Activated CD4-positive, alpha-beta T cell treated with anti-CD3 and anti-CD28 coated beads, Interleukin-2, amount 10 ng/mL, durations not matched to agents 24 days and 14 days (primary cell): ENCODE measurements at regions of chr4 and their contacts with region 1.

Region 1: DNA sequence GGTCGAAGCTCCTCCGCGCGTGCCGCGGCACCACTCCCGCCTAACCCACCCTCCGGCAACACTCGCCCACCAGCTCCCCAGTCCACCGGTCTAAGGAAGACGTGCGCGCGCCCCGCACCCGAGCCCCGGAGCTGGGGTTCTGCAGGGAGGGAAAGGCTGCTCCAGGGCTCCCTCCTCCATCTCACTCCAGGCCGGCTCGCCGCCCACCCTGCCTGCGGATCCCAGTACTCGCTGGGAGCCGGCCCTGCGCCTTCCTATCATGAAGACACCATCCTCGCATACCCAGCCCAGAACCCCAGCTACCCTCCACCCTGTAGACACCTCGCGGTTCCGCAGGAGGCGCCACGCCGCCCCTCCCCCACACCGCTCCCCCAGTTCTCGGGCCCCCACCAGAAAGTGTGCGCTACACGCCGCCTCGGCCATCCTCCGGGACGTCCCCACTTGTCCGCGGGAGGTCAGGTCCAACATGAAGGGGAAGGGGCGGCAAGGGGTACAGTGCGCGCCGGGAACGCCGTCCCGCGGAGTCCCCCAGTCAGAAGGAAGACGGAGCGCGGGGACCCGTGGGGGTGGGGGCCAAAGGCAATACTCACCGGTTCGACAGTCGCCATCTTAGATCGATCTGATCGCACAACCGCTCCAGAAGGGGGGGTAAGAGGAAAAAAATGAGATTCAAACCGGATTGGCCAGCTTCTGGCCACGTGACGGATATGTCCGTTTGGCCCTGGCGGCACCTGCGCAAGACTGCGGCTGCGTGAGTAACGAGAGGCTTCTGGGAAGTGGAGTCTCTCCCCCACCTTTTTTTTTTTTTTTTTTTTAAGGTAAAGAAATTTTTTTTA is at the start of gene EIF4E:
- DNase-seq: peak; percentile 98
- H3K4me3 Mint-ChIP-seq: peak within 1 kb of the TSS; percentile 90
- H3K27ac Mint-ChIP-seq: peak within 1 kb of the TSS; percentile 97
- H3K4me1 Mint-ChIP-seq: peaks cover 38% of the 10 kb centered on the region
- H3K27me3 Mint-ChIP-seq: no peaks in the 10 kb centered on the region
- total RNA-seq, gene EIF4E: 151 and 156 TPM in 2 replicates

Region 2: DNA sequence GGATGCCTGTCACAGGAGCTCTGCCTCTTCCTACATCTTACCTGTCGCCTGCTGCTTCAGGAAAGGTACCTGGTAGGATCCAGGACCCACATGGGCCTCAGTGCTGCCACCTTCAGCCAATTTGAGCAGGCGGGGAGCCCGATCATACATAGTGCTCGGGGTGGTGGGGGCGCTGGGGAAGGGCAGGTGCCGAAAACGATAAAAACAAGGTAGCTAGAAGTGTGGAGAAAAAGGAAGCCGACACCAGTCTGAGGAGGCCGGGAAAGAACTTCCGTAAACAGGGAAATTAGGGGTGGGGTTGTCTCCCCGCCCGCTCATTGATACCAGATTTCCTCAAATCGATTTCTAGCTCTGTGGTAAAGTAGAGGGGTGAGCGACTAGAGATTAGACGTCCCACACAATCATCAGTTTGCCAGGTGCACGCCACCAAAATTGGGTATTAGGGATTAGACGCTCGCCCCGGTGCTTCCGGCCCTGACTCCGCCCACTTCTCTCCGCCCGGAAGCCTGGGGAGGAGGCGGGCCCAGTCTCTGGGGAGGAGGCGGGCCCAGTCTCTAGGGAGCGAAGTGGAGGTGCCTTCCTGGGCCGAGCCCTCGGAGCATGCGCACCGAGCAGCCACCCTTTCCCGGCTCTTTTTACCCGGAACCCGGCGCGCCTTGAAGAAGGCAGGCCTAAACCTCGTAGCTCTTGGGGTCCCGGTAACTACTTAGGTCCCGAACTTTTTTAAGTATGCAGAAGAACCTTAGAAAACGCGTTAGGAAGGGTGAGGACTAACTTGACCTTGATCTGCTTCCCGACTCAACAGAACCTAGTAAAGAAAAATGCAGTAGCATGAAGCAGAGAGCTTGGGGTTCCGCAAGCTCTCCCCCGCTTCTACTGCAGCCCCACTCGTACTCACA is 785.5 kb before region 1 on chr4 and contains the start of gene STPG2:
- intact Hi-C with region 1: loop called (anchors 1 kb)
- DNase-seq: peak; percentile 98
- H3K4me3 Mint-ChIP-seq: peak within 1 kb of the TSS; percentile 95
- H3K27ac Mint-ChIP-seq: peak within 1 kb of the TSS; percentile 96
- H3K4me1 Mint-ChIP-seq: peaks cover 11% of the 10 kb centered on the region
- H3K27me3 Mint-ChIP-seq: peaks cover 14% of the 10 kb centered on the region
- total RNA-seq, gene STPG2: not detected in 2 replicates

Region 3: DNA sequence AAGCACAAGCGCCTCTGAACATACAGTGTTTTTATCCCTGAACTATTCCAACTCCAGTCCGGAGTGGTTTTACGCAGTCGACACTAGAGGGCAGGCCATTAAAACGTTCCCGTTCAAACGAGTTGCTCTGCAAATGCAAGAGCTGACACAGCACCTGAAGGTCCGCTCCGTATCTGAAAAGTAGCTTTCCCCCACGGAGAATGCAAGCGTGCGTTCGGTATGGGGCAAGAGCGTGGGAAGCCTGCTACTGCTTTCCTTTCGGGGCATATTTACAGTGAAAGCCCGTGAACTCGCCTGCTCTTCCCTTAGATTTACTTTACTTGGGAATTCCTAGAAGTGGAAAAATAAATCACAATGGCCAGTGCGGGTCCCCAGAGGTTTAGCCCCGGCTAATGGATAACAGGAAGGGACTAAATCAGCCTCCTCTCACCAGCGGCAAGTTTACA is 461.1 kb before region 1 on chr4:
- intact Hi-C with region 1: loop called (anchors 2 kb)
- DNase-seq: peak; percentile 92
- H3K4me3 Mint-ChIP-seq: peak overlapping the region; percentile 79
- H3K27ac Mint-ChIP-seq: peak overlapping the region; percentile 38
- H3K4me1 Mint-ChIP-seq: peaks cover 33% of the 10 kb centered on the region
- H3K27me3 Mint-ChIP-seq: no peaks in the 10 kb centered on the region

Region 4: GRCh38 chr4:98601708-98602107 is 327.0 kb before region 1 on chr4:
- intact Hi-C with region 1: loop called (anchors 1 kb)
- DNase-seq: no peak
- H3K4me3 Mint-ChIP-seq: peak overlapping the region; percentile 72
- H3K27ac Mint-ChIP-seq: peak overlapping the region; percentile 95
- H3K4me1 Mint-ChIP-seq: peaks cover 54% of the 10 kb centered on the region
- H3K27me3 Mint-ChIP-seq: no peaks in the 10 kb centered on the region

Region 5: DNA sequence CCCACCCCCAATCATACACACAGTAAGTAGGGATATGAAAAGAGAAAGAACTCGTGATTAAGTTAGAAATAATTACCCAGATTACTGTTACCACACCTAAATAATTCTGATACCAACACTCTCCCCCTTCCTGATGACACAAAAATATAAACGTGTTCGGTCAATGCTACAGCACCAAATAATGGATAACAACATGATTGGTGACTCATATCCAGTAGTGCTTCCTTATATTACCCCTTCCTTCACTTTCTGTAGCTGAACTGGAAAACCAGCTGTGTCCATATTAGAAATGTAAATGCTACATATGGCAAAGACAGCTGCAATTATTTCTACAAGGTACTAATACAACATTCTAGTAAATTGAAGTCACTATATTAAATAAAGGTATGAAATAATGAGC is 20.5 kb before region 1 on chr4:
- intact Hi-C with region 1: no loop called
- DNase-seq: no peak
- H3K4me3 Mint-ChIP-seq: no peak overlapping the region
- H3K27ac Mint-ChIP-seq: no peak overlapping the region
- H3K4me1 Mint-ChIP-seq: peaks cover 27% of the 10 kb centered on the region
- H3K27me3 Mint-ChIP-seq: no peaks in the 10 kb centered on the region

Region 6: DNA sequence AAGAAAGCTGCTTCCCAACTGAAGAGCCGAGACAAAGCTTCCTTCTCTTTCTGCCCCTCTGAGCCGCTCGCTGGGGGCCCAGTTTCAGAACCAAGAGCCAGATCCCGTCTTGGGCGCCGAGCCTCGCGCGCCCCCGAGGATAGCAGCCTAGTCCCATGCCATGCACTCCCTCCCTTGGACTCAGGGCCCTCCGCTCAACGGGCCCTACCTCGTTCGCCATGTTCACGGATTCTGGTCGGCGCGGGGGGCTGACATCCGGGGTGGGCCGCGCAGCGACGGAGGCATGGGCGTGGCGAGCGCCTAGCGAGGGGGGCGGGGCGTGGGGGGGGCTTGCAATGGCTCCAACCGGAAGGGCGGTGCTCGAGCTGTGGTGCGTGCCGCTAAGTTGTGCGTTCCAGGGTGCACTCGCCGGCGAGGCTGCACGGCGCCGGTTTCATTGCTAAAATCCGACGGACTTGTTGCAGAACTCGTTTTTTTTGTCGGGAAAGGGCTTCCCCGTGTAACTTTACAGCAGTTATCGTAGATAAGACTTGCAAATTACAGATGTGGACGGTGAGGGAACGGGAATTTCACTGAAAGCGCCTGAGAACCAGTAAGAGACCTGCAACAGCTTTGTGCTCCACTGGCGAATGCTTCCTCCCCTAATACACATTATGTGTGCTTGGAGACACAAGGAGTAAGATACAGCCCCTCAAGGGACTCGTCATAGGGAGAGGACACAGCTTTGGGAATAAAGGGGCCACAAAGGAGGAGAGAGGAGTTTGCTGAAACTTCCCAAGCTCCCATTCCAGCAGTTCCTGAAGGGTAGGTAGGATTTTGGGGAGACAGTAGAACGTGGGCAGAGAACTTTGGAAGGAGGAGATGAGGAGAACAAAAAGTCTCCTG is 160.0 kb after region 1 on chr4 and contains the start of gene ADH5:
- intact Hi-C with region 1: loop called (anchors 1 kb)
- DNase-seq: peak; percentile 95
- H3K4me3 Mint-ChIP-seq: peak within 1 kb of the TSS; percentile 90
- H3K27ac Mint-ChIP-seq: peak within 1 kb of the TSS; percentile 96
- H3K4me1 Mint-ChIP-seq: peaks cover 35% of the 10 kb centered on the region
- H3K27me3 Mint-ChIP-seq: peaks cover 1% of the 10 kb centered on the region
- total RNA-seq, gene ADH5: 82.6 and 85.3 TPM in 2 replicates

Region 7: DNA sequence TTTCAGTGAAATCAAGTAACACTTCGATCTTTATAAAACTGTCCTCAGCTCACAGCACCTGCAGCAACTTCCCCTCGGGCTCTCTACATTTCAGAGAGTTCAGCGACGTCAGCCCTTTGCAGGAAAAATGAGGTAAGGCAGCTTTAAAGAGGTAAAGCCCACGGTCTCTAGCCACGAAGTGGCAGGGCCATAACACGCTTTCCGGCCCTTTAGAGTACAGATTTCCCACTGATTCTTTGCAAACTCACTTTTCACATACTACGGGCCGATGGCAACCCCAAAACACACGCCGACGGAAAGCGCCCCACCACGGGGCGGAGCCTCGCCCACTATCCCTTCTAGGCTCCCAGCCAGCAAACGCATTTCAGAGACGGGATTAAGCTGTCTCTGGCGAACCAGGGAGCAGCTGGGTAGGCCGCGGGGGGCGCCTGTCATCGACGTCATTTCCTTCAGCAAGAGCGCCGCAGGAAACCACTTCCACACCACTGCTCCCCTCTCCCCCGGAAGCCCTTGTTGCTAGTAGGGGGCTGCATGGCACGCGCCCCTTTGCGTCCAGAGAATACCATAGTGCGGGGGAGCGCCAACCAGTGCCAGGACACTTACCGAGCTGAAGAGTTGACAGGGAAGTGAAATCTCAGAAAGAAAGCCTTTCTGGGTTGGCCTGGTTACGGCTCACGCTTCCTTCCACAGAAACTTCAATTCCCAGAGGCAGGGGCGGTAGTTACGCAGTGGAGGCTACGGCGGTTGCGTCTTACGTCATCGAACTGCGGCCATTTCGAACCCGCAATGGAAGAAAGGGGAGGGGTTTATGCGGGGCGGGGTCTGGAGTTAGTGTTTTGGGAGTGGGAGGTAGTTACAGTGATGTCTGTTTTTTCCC is 634.8 kb after region 1 on chr4 and contains the start of gene TRMT10A:
- intact Hi-C with region 1: loop called (anchors 5 kb)
- DNase-seq: peak; percentile 97
- H3K4me3 Mint-ChIP-seq: peak within 1 kb of the TSS; percentile 97
- H3K27ac Mint-ChIP-seq: peak within 1 kb of the TSS; percentile 99
- H3K4me1 Mint-ChIP-seq: peaks cover 16% of the 10 kb centered on the region
- H3K27me3 Mint-ChIP-seq: peaks cover 13% of the 10 kb centered on the region
- total RNA-seq, gene TRMT10A: 7.4 and 8.6 TPM in 2 replicates

Region 8: DNA sequence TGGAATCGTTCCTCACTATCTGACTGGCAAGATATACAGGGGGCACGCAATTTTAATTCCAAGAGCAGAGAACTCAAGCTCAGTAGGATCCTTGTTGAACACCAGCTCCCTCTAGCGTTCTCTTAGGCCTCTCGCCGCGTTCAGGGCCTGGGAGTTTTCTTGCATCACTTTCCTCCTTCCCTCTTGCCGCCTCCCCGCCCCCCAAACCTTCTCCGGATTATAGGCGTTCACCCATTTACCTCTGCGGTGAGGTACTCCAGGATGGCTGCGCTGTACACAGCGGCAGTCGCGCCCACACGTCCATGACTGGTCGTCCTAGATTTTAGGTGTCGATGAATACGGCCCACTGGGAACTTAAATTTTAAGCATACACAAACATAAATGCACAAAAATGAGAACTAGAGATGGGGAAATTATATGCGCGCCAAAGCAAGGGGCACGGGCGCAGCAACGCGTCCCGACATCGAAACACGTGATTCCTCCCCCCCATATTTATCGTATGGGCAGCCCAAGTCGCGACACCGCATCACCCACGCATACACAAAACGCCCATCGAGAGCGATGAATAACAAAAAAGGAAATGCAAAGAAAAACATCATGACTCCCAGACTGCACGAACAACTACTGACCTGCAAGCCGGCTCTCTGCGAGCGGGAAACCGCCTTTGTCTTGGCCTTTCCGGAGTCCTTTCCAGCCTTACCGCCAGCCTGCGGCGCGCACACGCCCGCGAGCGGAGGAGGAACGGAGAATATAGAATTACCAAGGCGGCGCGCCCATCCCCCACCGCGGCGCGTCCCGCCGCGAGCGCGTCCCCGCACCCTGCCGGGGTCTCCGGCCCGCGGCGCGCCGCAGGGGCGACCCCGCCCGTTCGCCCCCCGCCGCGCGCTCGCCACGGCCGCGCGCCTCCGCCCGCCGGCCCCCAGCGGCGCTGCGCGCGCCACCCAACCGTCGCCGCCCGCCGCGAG is 1020.6 kb after region 1 on chr4:
- intact Hi-C with region 1: loop called (anchors 2 kb)
- DNase-seq: peak; percentile 96
- H3K4me3 Mint-ChIP-seq: no peak overlapping the region
- H3K27ac Mint-ChIP-seq: no peak overlapping the region
- H3K4me1 Mint-ChIP-seq: peaks cover 26% of the 10 kb centered on the region
- H3K27me3 Mint-ChIP-seq: no peaks in the 10 kb centered on the region